Dendritic cell treated with granulocyte-macrophage colony-stimulating factor and Interleukin-4, amounts not matched to agents 40 ng/mL and 50 ng/mL, for 4 days (primary cell): ENCODE measurements at regions of chr6 and their contacts with region 1.

Region 1: GRCh38 chr6:3742426-3743344 is 8.8 kb downstream of the PXDC1 start:
- H3K4me3 Mint-ChIP-seq: peak overlapping the region; percentile 54
- H3K27ac Mint-ChIP-seq: peak overlapping the region; percentile 37
- H3K4me1 Mint-ChIP-seq: peaks cover 49% of the 10 kb centered on the region
- H3K27me3 Mint-ChIP-seq: peaks cover 2% of the 10 kb centered on the region

Region 2: DNA sequence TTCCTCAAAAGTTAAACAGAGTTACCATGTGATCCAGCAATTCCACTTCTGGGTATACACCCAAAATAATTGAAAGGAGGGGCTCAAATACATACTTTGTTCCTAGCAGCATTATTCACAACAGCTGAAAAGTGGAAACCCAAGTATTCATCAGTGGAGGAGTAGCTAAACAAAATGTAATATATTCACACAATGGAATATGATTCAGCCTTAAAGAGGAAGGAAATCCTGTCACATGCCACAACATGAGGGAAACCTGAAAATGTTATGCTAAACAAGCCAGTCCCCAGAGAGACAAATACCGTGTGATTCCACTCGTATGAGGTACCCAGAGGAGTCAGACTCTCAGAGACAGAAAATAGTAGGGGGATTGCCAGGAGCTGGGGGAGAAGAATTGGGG is 35.7 kb before region 1 on chr6:
- intact Hi-C with region 1: no loop called
- H3K4me3 Mint-ChIP-seq: no peak overlapping the region
- H3K27ac Mint-ChIP-seq: no peak overlapping the region
- H3K4me1 Mint-ChIP-seq: peaks cover 6% of the 10 kb centered on the region
- H3K27me3 Mint-ChIP-seq: peaks cover 8% of the 10 kb centered on the region

Region 3: GRCh38 chr6:3789018-3789895 is 46.6 kb after region 1 on chr6:
- intact Hi-C with region 1: no loop called
- H3K4me3 Mint-ChIP-seq: no peak overlapping the region
- H3K27ac Mint-ChIP-seq: no peak overlapping the region
- H3K4me1 Mint-ChIP-seq: peaks cover 35% of the 10 kb centered on the region
- H3K27me3 Mint-ChIP-seq: peaks cover 2% of the 10 kb centered on the region

Region 4: DNA sequence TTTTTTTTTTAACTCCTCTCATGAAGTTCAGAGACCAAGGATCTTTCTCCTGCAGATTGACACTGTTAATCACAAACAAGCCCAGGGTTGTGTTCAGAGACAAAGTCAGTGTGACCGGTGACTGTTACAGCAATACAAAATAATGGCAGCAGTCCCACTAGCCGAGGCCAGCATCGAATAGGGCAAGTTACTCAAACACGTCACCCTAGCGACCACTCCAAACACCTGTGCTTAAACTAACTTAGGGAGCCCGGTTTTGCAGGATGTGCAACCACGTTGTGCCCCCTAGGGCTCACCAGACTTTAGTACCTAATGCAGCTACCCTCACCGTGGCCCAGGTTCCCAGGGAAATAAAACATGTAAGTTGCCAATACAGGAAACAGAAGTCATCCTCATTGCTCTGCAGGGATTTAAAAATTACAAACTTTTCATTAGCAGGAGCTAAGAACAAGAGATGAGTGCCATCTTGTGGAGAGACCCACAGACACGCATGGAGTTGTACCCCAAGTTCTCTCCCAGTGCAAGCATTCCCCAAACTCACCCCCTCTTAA is 144.5 kb after region 1 on chr6:
- intact Hi-C with region 1: loop called (anchors 1 kb)
- H3K4me3 Mint-ChIP-seq: no peak overlapping the region
- H3K27ac Mint-ChIP-seq: no peak overlapping the region
- H3K4me1 Mint-ChIP-seq: peaks cover 11% of the 10 kb centered on the region
- H3K27me3 Mint-ChIP-seq: peaks cover 10% of the 10 kb centered on the region

Region 5: DNA sequence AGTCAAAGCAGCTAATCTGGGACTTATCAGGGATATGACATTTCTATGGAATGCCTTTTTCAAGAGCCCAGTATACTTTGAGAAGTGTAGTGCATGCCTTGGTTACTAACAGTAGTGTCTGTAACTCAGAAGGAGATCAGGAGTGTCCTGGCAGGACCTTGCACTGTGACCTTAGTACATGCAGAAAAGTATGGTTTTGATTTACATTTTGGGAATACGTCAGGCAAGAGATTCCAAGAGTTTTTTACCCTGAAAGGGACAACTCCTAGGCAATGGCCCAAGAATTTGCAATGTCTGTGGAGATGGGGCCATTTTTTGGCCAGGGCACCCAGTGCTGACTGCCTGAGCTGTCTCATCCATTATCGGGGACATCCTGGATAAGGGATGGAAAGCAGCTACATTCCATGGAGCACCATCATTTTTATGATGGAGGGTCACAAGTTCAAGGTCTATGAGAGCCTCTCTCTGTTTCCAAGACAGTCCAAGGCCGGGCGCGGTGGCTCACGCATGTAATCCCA is 186.7 kb after region 1 on chr6:
- intact Hi-C with region 1: loop called (anchors 1 kb)
- H3K4me3 Mint-ChIP-seq: no peak overlapping the region
- H3K27ac Mint-ChIP-seq: no peak overlapping the region
- H3K4me1 Mint-ChIP-seq: no peaks in the 10 kb centered on the region
- H3K27me3 Mint-ChIP-seq: no peaks in the 10 kb centered on the region

Region 6: GRCh38 chr6:3977875-3978711 is 235.4 kb after region 1 on chr6:
- intact Hi-C with region 1: loop called (anchors 5 kb)
- H3K4me3 Mint-ChIP-seq: no peak overlapping the region
- H3K27ac Mint-ChIP-seq: no peak overlapping the region
- H3K4me1 Mint-ChIP-seq: no peaks in the 10 kb centered on the region
- H3K27me3 Mint-ChIP-seq: peaks cover 6% of the 10 kb centered on the region

Region 7: DNA sequence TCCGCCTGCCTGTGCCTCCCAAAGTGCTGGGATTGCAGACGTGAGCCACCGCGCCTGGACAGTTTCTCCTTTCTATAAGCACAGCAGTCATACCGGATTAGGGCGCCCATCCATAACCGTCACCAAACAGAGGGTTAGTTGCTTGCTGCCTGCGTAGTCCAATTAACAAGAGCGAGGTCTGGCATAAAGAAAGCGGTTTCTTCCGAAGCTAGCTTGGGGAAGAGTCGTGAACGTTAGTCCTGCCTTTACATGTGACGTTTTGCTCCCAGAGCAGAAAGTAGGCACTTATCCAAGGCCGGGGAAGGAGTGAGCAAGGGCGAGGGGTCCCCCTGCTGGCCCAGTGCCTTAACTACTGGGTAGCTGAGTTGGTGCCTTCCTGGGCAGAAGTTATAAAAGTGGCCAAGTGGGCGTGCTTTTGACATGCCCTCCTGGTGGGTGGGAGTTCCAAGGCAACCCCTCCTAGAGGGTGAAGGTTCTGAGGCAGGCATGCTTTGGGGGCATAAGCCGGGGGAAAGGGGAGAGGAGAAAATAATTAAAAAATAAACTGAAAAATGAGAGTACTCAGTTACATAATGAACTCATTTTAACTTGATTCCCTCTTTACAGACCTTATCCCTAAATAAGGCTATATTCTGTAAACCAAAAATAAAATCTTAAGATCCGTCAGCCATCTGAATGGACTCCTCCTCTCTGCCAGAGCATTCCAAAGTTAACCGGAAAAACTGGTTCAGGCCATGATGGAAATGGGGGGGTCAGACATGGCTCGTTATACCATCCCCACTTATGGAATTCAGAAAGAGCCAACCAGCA is 248.2 kb after region 1 on chr6:
- intact Hi-C with region 1: loop called (anchors 5 kb)
- H3K4me3 Mint-ChIP-seq: no peak overlapping the region
- H3K27ac Mint-ChIP-seq: peak overlapping the region; percentile 60
- H3K4me1 Mint-ChIP-seq: peaks cover 16% of the 10 kb centered on the region
- H3K27me3 Mint-ChIP-seq: no peaks in the 10 kb centered on the region

Region 8: GRCh38 chr6:4008324-4009047 is 265.8 kb after region 1 on chr6:
- intact Hi-C with region 1: loop called (anchors 5 kb)
- H3K4me3 Mint-ChIP-seq: no peak overlapping the region
- H3K27ac Mint-ChIP-seq: no peak overlapping the region
- H3K4me1 Mint-ChIP-seq: peaks cover 31% of the 10 kb centered on the region
- H3K27me3 Mint-ChIP-seq: no peaks in the 10 kb centered on the region

Region 9: GRCh38 chr6:4155848-4156466 is 413.3 kb after region 1 on chr6:
- intact Hi-C with region 1: loop called (anchors 5 kb)
- H3K4me3 Mint-ChIP-seq: no peak overlapping the region
- H3K27ac Mint-ChIP-seq: no peak overlapping the region
- H3K4me1 Mint-ChIP-seq: peaks cover 4% of the 10 kb centered on the region
- H3K27me3 Mint-ChIP-seq: peaks cover 3% of the 10 kb centered on the region